Activated CD4-positive, alpha-beta T cell treated with anti-CD3 and anti-CD28 coated beads, Interleukin-2, amount 10 ng/mL, durations not matched to agents 24 days and 14 days (primary cell): ENCODE measurements at regions of chr7 and their contacts with region 1.

Region 1: GRCh38 chr7:151028131-151028947 is at the start of gene ABCB8:
- DNase-seq: peak; percentile 100
- H3K4me3 Mint-ChIP-seq: peak within 1 kb of the TSS; percentile 97
- H3K27ac Mint-ChIP-seq: peak within 1 kb of the TSS; percentile 97
- H3K4me1 Mint-ChIP-seq: peaks cover 24% of the 10 kb centered on the region
- H3K27me3 Mint-ChIP-seq: peaks cover 2% of the 10 kb centered on the region
- total RNA-seq, gene ABCB8: 56.4 and 57.4 TPM in 2 replicates

Region 2: GRCh38 chr7:150909200-150909995 is 118.9 kb before region 1 on chr7:
- intact Hi-C with region 1: no loop called
- DNase-seq: peak; percentile 80
- H3K4me3 Mint-ChIP-seq: no peak overlapping the region
- H3K27ac Mint-ChIP-seq: no peak overlapping the region
- H3K4me1 Mint-ChIP-seq: peaks cover 6% of the 10 kb centered on the region
- H3K27me3 Mint-ChIP-seq: peaks cover 41% of the 10 kb centered on the region

Region 3: GRCh38 chr7:151017953-151018420 is 10.4 kb before region 1 on chr7:
- intact Hi-C with region 1: loop called (anchors 1 kb)
- DNase-seq: peak; percentile 95
- H3K4me3 Mint-ChIP-seq: peak overlapping the region; percentile 86
- H3K27ac Mint-ChIP-seq: peak overlapping the region; percentile 93
- H3K4me1 Mint-ChIP-seq: peaks cover 43% of the 10 kb centered on the region
- H3K27me3 Mint-ChIP-seq: peaks cover 27% of the 10 kb centered on the region

Region 4: GRCh38 chr7:151080522-151081169 is 52.3 kb after region 1 on chr7 and contains the start of gene FASTK:
- intact Hi-C with region 1: loop called (anchors 1 kb)
- DNase-seq: peak; percentile 97
- H3K4me3 Mint-ChIP-seq: peak within 1 kb of the TSS; percentile 95
- H3K27ac Mint-ChIP-seq: peak within 1 kb of the TSS; percentile 82
- H3K4me1 Mint-ChIP-seq: peaks cover 30% of the 10 kb centered on the region
- H3K27me3 Mint-ChIP-seq: peaks cover 9% of the 10 kb centered on the region
- total RNA-seq, gene FASTK: 90.8 and 92.3 TPM in 2 replicates

Region 5: DNA sequence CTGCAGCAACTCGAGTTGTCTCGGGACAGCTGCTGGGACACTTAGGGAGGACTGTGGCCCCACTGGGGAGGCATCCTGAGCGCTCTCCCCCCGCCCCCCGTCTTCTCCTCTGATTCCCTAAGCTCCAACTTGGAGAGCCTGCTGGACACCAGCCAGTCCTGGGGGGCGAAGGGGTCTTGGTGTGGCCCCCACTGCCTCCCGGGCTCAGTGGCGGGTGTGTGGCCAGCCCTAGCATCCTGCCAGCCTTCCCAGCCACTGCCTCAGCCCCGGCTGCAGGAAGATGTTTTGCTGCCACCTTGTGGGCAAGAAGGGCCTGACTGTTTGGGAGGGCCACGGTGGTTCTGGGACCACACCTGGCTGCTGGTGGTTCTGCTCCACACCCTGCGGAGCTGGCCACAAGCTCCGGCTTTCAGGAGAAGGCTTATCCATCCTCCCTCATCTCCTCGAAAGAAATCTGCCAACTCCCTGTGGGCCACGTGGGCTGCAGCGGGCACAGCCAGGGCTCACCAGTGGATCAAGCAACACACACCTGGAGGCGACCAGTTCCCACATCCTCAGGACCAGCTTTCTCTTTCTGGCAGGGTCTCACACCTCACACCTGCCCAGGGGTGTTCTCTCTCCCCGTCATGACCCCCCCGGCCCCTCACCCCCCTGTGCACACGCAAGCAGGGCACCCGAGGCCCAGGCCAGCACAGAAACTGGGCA is 82.8 kb after region 1 on chr7:
- intact Hi-C with region 1: loop called (anchors 1 kb)
- DNase-seq: peak; percentile 93
- H3K4me3 Mint-ChIP-seq: no peak overlapping the region
- H3K27ac Mint-ChIP-seq: no peak overlapping the region
- H3K4me1 Mint-ChIP-seq: peaks cover 3% of the 10 kb centered on the region
- H3K27me3 Mint-ChIP-seq: peaks cover 16% of the 10 kb centered on the region

Region 6: GRCh38 chr7:151232091-151232916 is 204.0 kb after region 1 on chr7 and contains the start of gene CHPF2:
- intact Hi-C with region 1: loop called (anchors 1 kb)
- DNase-seq: peak; percentile 98
- H3K4me3 Mint-ChIP-seq: peak within 1 kb of the TSS; percentile 100
- H3K27ac Mint-ChIP-seq: peak within 1 kb of the TSS; percentile 99
- H3K4me1 Mint-ChIP-seq: peaks cover 33% of the 10 kb centered on the region
- H3K27me3 Mint-ChIP-seq: peaks cover 6% of the 10 kb centered on the region
- total RNA-seq, gene CHPF2: 42.0 and 46.4 TPM in 2 replicates

Region 7: DNA sequence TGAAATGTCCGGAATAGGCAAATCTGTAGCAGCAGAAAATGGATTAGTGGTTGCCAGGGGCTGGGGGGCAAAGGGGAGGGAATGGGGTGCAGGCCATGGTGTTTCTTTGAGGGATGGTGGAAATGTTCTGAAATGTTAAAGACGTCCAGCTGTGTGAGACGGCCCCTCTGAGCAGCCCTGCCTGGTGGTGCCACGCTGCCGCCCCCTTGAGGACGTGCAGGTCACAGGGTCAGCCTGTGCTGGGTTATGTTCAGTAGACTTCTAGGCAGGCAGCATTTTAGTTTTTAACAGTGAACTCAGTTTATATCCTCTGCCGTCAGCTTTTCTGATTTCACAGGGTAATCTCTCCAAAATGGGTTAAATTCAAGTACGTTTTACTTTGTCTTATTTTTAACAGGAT is 322.7 kb after region 1 on chr7:
- intact Hi-C with region 1: loop called (anchors 2 kb)
- DNase-seq: peak; percentile 78
- H3K4me3 Mint-ChIP-seq: peak overlapping the region; percentile 80
- H3K27ac Mint-ChIP-seq: peak overlapping the region; percentile 93
- H3K4me1 Mint-ChIP-seq: peaks cover 40% of the 10 kb centered on the region
- H3K27me3 Mint-ChIP-seq: no peaks in the 10 kb centered on the region